ENCODE measurements at regions of chr4 and their contacts with region 1.

Region 1: DNA sequence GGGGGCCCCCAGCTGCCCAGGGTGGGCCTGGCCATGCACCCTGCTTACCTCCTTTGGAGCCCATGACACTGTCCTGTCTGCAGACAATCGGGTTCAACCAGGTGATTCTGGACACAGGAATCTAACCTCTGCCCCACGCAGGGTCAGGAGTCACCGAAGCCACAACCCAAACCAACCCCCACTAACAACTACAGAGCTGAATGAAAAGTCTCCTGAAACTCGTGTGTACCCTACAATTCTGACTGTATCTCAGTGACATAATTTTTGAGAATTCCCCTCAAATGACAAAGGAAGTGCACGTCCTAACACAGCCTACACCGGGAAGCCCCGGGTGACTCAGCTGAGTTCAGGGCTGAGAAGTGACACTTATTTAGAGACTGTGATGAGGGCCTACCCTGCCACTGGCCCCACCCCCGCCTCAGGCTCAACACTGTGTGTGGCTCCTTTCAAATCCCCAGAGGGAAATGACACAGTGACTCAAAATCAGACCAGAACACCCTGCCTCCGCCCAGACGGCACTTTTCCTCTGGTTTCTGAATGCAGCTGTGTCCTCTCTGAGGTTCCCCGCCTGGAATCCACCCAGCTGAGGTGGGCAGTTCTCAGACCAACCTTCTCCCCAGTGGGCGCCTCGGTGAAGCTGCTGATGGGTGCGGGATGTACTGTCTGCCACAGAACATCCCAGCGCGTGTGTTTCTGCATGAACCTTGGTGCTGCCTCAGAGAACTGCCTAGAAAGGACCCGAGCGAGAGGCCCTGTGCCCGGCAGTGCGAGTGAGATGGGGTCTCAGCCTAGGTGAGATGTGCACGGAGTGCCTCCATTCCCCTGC is 9.9 kb downstream of the TNIP2 start:
- DNase-seq: peak; percentile 98
- H3K4me3 Mint-ChIP-seq: peak overlapping the region; percentile 54
- H3K27ac Mint-ChIP-seq: peak overlapping the region; percentile 90
- H3K4me1 Mint-ChIP-seq: peaks cover 61% of the 10 kb centered on the region
- H3K27me3 Mint-ChIP-seq: no peaks in the 10 kb centered on the region

Region 2: DNA sequence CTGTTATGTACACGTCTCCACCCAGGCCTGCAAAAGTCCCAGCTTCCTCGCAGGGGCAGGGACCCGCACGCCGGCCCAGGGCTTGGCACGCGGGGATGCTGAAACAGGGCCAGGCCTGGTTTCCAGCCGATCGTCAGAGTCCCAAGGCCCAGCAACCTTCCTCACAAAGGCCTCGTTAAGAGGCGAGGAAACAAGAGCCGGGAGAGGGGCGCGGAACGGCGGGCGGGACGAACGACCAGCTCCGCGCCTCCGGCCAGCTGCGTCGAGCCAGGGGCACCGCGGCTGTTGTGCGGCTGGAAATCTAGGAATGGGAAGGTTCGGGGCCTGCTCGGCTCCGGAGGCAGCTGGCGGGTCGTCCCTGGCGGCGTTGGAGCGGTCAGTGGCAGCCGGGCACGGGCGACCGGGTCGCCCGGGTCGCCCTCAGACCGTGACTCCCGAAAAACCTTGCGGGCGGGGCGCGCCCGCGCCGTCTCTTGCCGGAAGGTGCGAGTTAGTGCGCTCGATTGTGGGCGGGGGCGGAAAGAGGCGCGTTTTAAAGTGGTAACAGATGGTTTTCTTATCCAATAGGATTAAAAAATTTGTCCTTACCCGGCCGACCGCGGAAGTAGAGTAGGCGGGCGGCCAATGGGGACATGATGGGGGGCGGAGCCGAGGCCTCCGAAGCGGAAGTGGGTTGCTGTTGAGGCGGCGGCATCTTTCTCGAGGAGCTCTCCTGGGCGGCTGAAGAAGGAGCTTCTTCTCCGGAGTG is 277.6 kb before region 1 on chr4 and contains the start of gene RNF4:
- CTCF ChIA-PET with region 1: no interaction called
- POLR2A ChIA-PET with region 1: interaction called, 8 read pairs
- intact Hi-C with region 1: loop called (anchors 2 kb)
- DNase-seq: peak; percentile 98
- H3K4me3 Mint-ChIP-seq: peak within 1 kb of the TSS; percentile 97
- H3K27ac Mint-ChIP-seq: peak within 1 kb of the TSS; percentile 98
- H3K4me1 Mint-ChIP-seq: peaks cover 42% of the 10 kb centered on the region
- H3K27me3 Mint-ChIP-seq: no peaks in the 10 kb centered on the region
- total RNA-seq, gene RNF4: 84.6 to 90.3 TPM

Region 3: DNA sequence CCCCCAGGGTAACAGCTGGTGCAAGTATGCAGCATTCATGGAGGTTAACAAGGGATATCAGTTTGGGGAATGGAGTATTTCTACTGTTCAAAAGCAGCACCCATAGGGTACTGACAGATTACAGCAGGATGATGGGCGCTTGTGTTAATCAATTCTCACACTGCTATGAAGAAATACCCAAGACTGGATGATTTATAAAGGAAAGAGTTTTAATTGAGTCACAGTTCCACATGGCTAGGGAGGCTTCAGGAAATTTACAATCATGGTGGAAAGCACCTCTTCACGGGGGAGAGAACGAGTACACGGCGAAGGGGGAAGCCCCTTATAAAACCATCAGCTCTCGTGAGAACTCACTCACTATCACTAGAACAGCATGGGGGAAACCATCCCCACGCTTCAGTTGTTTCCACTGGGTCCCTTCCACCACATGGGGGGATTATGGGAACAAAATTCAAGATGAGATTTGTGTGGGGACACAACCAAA is 54.2 kb before region 1 on chr4:
- CTCF ChIA-PET with region 1: interaction called, 3 read pairs
- POLR2A ChIA-PET with region 1: interaction called, 6 read pairs
- intact Hi-C with region 1: loop called (anchors 1 kb)
- DNase-seq: peak; percentile 66
- H3K4me3 Mint-ChIP-seq: no peak overlapping the region
- H3K27ac Mint-ChIP-seq: peak overlapping the region; percentile 78
- H3K4me1 Mint-ChIP-seq: peaks cover 25% of the 10 kb centered on the region
- H3K27me3 Mint-ChIP-seq: no peaks in the 10 kb centered on the region

Region 4: DNA sequence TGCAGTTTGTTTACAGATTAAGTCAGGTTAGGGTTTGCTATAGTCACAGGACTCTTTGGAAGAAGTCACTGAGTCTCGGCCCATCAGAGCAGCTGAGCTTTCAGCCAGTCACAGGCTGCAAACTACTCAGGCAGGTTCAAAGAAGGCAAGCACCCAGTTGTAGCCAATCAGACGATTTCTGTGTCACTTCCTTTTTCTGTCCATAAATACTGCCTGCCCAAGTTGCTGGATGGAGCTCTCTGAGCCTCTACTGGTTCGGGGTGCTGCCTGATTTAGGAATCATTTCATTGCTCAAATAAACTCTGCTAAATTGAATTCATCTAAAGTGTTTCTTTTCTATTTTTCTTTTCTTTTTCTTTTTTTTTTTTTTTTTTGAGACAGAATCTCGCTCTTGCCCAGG is 39.4 kb after region 1 on chr4:
- CTCF ChIA-PET with region 1: no interaction called
- POLR2A ChIA-PET with region 1: no interaction called
- intact Hi-C with region 1: no loop called
- DNase-seq: peak; percentile 70
- H3K4me3 Mint-ChIP-seq: no peak overlapping the region
- H3K27ac Mint-ChIP-seq: peak overlapping the region; percentile 92
- H3K4me1 Mint-ChIP-seq: peaks cover 60% of the 10 kb centered on the region
- H3K27me3 Mint-ChIP-seq: no peaks in the 10 kb centered on the region

Region 5: GRCh38 chr4:2843263-2843940 is 97.2 kb after region 1 on chr4 and contains the start of gene ADD1:
- CTCF ChIA-PET with region 1: no interaction called
- POLR2A ChIA-PET with region 1: no interaction called
- intact Hi-C with region 1: loop called (anchors 1 kb)
- DNase-seq: peak; percentile 97
- H3K4me3 Mint-ChIP-seq: peak within 1 kb of the TSS; percentile 89
- H3K27ac Mint-ChIP-seq: peak within 1 kb of the TSS; percentile 82
- H3K4me1 Mint-ChIP-seq: peaks cover 51% of the 10 kb centered on the region
- H3K27me3 Mint-ChIP-seq: no peaks in the 10 kb centered on the region
- total RNA-seq, gene ADD1: 212 TPM

Region 6: GRCh38 chr4:2954358-2955185 is 208.4 kb after region 1 on chr4:
- CTCF ChIA-PET with region 1: interaction called, 8 read pairs
- POLR2A ChIA-PET with region 1: interaction called, 14 read pairs
- intact Hi-C with region 1: loop called (anchors 1 kb)
- DNase-seq: peak; percentile 92
- H3K4me3 Mint-ChIP-seq: peak overlapping the region; percentile 61
- H3K27ac Mint-ChIP-seq: peak overlapping the region; percentile 99
- H3K4me1 Mint-ChIP-seq: peaks cover 75% of the 10 kb centered on the region
- H3K27me3 Mint-ChIP-seq: no peaks in the 10 kb centered on the region

Region 7: GRCh38 chr4:3077796-3078195 is 331.6 kb after region 1 on chr4:
- CTCF ChIA-PET with region 1: no interaction called
- POLR2A ChIA-PET with region 1: no interaction called
- intact Hi-C with region 1: no loop called
- DNase-seq: peak; percentile 64
- H3K4me3 Mint-ChIP-seq: no peak overlapping the region
- H3K27ac Mint-ChIP-seq: peak overlapping the region; percentile 70
- H3K4me1 Mint-ChIP-seq: peaks cover 42% of the 10 kb centered on the region
- H3K27me3 Mint-ChIP-seq: no peaks in the 10 kb centered on the region

Measured in activated CD4-positive, alpha-beta memory T cell treated with anti-CD3 and anti-CD28 coated beads for 36 hours (primary cell).